ENCODE measurements at regions of chrX and their contacts with region 1.

Region 1: DNA sequence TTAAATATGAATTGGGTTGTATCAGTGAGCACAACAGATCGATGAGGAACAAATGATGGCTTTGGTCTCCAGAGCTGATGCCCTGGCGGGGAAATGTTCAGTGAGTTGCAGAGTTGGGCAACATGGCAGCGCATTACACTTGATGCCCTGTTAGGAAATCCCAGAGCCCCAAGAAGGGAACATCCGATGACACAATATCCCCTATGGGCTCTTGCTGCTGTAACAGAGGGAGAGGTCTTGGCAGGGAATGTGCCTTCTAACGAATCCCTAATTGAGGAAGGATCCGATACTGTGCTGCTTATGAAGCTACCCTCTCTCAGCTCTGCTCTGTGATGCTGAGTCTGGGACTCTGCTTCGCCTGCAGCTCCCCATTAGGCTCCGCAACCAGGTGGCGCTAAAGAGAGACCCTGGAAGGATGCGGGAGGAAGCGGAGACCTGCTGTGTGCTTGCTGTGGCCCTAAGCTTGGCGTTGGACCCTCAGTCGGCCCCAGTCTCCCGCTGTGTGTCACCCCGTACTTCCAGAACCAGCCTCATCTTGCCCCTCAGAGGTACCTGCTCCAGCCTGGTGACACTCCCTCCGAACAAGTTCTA is 38.9 kb downstream of the PDHA1 start:
- DNase-seq: peak; percentile 15
- ATAC-seq: peak; percentile 97
- H3K4me3 ChIP-seq: no peak overlapping the region
- H3K27ac ChIP-seq: no peak overlapping the region
- H3K4me1 ChIP-seq: no peaks in the 10 kb centered on the region
- H3K27me3 ChIP-seq: no peaks in the 10 kb centered on the region
- CTCF ChIP-seq: peak; percentile 46 to 75 (median 61); a peak in 5 of 6 replicates
- POLR2A ChIP-seq: no peak
- RAD21 ChIP-seq: peak; percentile 53

Region 2: DNA sequence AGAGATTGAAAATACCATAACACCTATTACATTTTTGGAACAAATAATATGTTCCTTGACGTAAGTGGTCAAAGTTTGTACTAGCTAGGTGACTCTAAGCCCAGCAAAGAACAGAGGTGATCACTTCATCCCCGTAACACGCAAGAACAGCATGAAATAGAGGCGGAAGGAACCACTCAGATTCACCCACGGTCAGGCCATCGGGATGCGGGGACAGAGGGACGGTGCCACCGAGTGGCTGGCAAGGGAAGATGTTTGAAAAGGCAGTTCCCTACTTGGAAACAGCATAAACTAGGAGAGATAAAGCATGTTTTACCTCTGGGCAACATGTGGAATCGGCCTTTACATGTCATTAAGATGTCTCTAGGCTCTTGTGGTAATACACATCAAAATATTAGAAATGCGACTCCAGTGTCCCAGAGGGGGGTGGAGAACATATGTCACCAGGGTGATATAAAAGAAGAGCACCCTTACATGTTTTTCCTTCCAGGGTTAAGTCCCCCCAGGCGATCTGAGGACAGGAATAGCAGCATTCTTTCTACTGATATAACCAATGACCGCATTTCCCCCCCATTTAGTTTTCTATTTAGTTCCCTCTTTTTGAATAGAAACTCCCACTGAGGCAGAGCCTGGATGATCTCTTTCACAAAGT is 482.7 kb before region 1 on chrX:
- CTCF ChIA-PET with region 1: no interaction called
- POLR2A ChIA-PET with region 1: no interaction called
- RAD21 ChIA-PET with region 1: no interaction called
- intact Hi-C with region 1: no loop called
- DNase-seq: no peak
- ATAC-seq: peak; percentile 54; the same call in 1 of the 2 replicates
- H3K4me3 ChIP-seq: no peak overlapping the region
- H3K27ac ChIP-seq: no peak overlapping the region
- H3K4me1 ChIP-seq: no peaks in the 10 kb centered on the region
- H3K27me3 ChIP-seq: no peaks in the 10 kb centered on the region
- CTCF ChIP-seq: peak; percentile 32 to 36 (median 33); a peak in 4 of 6 replicates
- POLR2A ChIP-seq: no peak
- RAD21 ChIP-seq: peak; percentile 64

Region 3: GRCh38 chrX:19496711-19497110 is 114.1 kb after region 1 on chrX:
- CTCF ChIA-PET with region 1: no interaction called
- POLR2A ChIA-PET with region 1: no interaction called
- RAD21 ChIA-PET with region 1: no interaction called
- intact Hi-C with region 1: no loop called
- DNase-seq: no peak
- ATAC-seq: no peak
- H3K4me3 ChIP-seq: no peak overlapping the region
- H3K27ac ChIP-seq: no peak overlapping the region
- H3K4me1 ChIP-seq: no peaks in the 10 kb centered on the region
- H3K27me3 ChIP-seq: no peaks in the 10 kb centered on the region
- CTCF ChIP-seq: no peak
- POLR2A ChIP-seq: no peak
- RAD21 ChIP-seq: no peak

Region 4: DNA sequence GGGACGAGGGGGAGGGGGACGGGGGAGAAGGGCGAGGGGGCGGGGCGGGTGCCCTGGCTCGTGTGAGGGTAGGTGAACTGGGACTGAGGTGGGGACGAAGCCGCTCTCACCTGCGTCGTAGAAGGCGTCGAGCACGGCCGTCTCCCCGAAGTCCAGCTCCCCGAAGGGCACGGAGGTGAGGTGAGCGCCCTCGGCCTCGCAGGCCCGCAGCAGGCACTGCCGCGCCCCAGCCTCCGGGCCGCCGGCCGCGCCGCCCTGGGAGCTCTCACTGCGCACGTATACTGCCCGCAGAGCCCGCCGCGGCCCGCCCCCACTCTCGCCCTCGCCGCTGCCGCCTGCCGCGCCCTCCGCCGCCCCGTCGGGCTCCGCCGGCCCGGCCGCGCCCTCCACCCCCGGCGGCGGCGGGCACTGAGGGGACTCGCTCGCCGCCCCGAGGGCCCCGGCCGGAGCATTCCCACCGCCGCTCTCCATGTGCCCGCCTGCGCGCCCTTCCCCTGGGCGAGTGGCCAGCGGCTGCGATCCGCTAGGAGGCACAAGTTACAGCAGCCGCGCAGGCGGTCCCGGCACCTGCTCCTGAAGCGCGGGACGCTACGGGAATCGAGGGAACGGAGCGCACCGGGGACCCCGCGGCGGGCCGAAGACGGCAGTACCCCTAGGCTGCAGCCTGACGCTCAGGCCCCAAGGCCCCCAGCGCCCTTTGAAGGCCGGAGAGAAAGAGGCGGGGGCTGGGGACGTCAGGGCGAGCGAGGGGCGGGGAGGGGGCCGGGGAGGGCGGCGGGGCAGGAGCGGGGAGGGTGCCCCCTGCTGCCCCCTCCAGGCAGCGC is 132.4 kb after region 1 on chrX and contains the start of gene MAP3K15:
- CTCF ChIA-PET with region 1: interaction called, 6 read pairs
- POLR2A ChIA-PET with region 1: no interaction called
- RAD21 ChIA-PET with region 1: no interaction called
- intact Hi-C with region 1: loop called (anchors 5 kb)
- DNase-seq: no peak
- ATAC-seq: peak; percentile 88
- H3K4me3 ChIP-seq: peak within 1 kb of the TSS; percentile 32 to 51
- H3K27ac ChIP-seq: peak within 1 kb of the TSS; percentile 35; the same call in 1 of the 2 replicates
- H3K4me1 ChIP-seq: no peaks in the 10 kb centered on the region; a peak in 1 of 4 replicates
- H3K27me3 ChIP-seq: no peaks in the 10 kb centered on the region; the same call in 1 of the 2 replicates
- CTCF ChIP-seq: no peak; a peak in 1 of 6 replicates
- POLR2A ChIP-seq: no peak
- RAD21 ChIP-seq: no peak
- total RNA-seq, gene MAP3K15: 1.3 TPM

Region 5: DNA sequence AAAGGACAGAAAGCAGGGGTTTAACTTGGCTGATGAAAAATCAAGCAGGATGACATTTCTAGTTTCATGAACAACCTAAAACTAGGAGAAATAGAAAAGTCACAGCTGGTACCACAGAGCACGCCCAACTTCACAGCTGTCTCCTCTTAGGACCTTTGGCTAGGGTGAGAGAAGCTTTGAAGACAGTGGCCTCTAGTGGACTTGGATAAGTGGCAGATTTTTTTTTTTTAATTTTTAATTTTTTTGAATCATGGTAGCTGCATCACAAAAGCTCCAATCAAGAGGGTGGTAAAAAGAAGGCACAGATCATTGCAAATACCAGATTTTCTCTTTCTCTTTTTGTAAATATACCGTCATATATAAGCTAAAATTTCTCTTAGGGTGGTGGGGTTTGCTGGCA is 152.8 kb after region 1 on chrX:
- CTCF ChIA-PET with region 1: interaction called, 16 read pairs
- POLR2A ChIA-PET with region 1: no interaction called
- RAD21 ChIA-PET with region 1: no interaction called
- intact Hi-C with region 1: loop called (anchors 1 kb)
- DNase-seq: no peak
- ATAC-seq: no peak
- H3K4me3 ChIP-seq: no peak overlapping the region
- H3K27ac ChIP-seq: no peak overlapping the region
- H3K4me1 ChIP-seq: no peaks in the 10 kb centered on the region
- H3K27me3 ChIP-seq: no peaks in the 10 kb centered on the region
- CTCF ChIP-seq: peak; percentile 12 to 27 (median 21); a peak in 3 of 6 replicates
- POLR2A ChIP-seq: no peak
- RAD21 ChIP-seq: peak; percentile 34; the same call in 1 of the 2 replicates